PC-3 (cell line): ENCODE measurements at regions of chr10 and their contacts with region 1.

Region 1: DNA sequence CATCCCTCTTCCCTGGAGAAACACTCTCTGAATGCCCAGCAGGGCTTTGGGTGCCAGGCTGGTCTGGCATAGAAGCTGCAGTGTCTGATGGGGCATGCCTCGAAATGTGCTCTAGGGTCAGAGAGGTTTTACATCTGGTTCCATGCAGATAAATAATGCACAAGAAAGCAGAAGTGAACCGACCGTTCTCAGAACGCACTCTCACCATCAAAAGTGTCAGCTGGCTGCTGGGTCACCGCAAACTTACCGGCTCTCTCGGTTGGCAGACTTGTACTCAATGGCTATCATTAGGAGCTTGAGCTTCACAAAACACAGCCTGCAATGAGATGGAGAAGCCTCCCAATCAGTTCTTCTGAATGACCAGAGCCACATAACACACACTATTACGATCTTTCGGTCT is 610.0 kb downstream of the KCNMA1 start:
- DNase-seq: no peak
- ATAC-seq: no peak
- H3K4me3 ChIP-seq: no peak overlapping the region
- H3K27ac ChIP-seq: no peak overlapping the region
- H3K4me1 ChIP-seq: no peaks in the 10 kb centered on the region
- H3K27me3 ChIP-seq: no peaks in the 10 kb centered on the region
- CTCF ChIP-seq: no peak

Region 2: DNA sequence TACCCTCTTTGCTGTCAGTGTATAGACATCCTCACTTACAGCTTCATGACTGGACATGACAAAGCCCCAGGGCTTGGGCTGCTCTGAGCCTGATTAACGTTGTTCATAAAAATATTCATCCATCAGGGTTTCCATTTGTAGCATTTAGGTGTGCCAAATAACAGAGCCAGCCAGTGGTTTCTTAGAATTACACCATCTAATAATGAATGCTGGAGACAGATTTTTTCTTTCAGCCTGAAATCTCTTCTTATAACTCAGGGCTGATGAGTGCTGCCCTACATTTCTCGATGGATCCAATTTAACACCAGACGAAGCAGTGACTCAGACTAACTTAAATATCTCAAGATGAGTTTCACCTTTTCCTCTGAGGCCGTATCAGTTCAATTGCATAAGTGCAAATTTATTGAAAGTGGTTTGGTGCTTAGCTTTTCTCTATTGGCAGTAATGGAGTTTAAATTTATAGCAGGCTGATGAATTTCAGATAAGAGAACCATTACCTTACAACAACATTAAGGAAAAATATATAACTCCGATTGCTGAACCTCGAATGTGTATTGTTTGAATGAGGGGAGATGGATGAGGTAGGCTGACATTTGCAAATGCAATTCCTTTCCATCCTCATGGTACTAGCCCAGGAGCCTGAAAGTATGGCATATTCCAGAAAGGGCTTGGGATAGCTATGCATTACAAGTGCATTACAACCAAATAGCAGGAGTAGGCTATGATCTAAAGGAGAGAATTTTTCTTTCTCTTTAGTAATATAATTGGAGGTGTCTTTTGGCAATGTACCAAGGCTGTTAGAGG is 290.6 kb before region 1 on chr10:
- CTCF ChIA-PET with region 1: no interaction called
- POLR2A ChIA-PET with region 1: no interaction called
- intact Hi-C with region 1: loop called (anchors 10 kb)
- DNase-seq: no peak
- ATAC-seq: no peak
- H3K4me3 ChIP-seq: no peak overlapping the region
- H3K27ac ChIP-seq: no peak overlapping the region
- H3K4me1 ChIP-seq: no peaks in the 10 kb centered on the region
- H3K27me3 ChIP-seq: peaks cover 83% of the 10 kb centered on the region
- CTCF ChIP-seq: no peak

Region 3: GRCh38 chr10:77056650-77057049 is 29.1 kb after region 1 on chr10:
- CTCF ChIA-PET with region 1: no interaction called
- POLR2A ChIA-PET with region 1: no interaction called
- intact Hi-C with region 1: loop called (anchors 5 kb)
- DNase-seq: no peak
- ATAC-seq: no peak
- H3K4me3 ChIP-seq: no peak overlapping the region
- H3K27ac ChIP-seq: no peak overlapping the region
- H3K4me1 ChIP-seq: peaks cover 12% of the 10 kb centered on the region
- H3K27me3 ChIP-seq: no peaks in the 10 kb centered on the region
- CTCF ChIP-seq: no peak

Region 4: DNA sequence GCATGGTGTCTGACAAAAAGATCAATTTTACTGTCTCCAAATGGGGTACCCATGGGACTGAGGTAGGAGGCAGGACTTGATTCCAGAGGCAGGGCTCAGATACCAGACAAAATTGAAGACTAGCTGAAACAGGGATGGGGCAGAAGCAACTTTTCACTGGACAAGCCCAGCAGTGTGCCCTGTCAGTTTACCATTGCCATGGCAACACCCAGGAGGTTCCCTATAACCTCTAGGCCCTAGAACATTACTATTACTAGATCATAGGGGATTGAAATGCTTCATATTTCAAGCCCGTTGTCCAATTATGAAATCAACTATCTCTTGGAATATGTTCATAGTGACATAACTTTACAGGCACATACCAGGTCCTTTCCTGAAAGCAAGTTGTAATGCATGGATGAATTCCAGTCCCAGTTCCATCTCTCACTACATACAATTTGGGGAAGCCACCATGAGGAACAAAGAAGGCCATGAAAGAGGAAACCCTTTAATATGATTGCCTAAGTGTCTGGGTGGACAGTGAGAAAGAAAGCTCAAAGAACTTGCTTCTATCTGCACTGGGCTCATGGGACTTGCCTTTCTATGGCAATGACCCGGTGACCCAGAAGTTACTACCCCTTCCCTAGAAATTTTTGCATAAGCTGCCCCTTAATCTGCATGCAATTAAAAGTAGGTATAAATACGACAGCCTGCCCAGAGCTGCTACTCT is 52.2 kb after region 1 on chr10:
- CTCF ChIA-PET with region 1: no interaction called
- POLR2A ChIA-PET with region 1: no interaction called
- intact Hi-C with region 1: loop called (anchors 5 kb)
- DNase-seq: no peak
- ATAC-seq: no peak
- H3K4me3 ChIP-seq: no peak overlapping the region
- H3K27ac ChIP-seq: no peak overlapping the region
- H3K4me1 ChIP-seq: 0 out of 2 replicates have a peak, but pooled peaks cover 7% of the 10 kb centered on the region
- H3K27me3 ChIP-seq: no peaks in the 10 kb centered on the region
- CTCF ChIP-seq: no peak